MCF 10A (cell line): ENCODE measurements at regions of chr3 and their contacts with region 1.

Region 1: DNA sequence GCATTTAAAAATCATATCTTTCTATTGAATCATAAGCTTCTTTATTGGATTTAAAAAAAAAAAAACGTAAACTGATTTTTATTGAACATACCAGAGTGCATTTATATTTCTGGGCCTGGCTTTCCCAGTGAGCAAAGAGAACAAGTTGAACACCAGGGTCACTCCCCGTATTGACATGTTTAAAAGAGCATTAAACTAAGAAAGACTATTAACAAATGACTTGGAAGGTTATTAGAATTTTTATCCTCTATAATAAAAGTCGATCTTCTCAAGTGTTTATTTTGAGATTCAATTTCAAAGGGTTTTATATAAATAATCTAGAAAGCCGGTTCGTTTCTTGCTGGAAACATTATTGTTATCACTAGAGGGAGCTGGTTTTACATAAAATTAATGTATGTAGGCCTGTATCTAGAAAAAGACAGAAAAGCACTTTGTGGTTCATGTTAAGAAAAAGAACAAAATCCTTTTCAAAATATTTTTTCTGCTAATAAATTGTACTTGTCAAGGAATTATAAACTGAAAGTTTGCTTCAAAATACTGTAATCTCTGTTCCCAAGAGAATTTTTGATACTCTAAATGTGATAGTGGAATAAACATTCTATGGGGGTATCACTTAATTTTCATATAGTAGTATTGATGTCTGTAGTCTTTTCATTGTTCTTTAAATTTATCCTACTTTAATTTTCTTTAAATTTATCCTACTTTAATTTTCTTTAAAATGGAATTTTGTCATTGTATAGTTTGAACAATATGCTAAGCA is 321.8 kb upstream of the MME start:
- DNase-seq: peak; percentile 37
- H3K4me3 Mint-ChIP-seq: no peak overlapping the region
- H3K27ac Mint-ChIP-seq: no peak overlapping the region
- H3K4me1 Mint-ChIP-seq: peaks cover 5% of the 10 kb centered on the region
- H3K27me3 Mint-ChIP-seq: no peaks in the 10 kb centered on the region
- CTCF ChIP-seq: peak; percentile 40

Region 2: GRCh38 chr3:154954753-154955152 is 196.5 kb after region 1 on chr3:
- CTCF ChIA-PET with region 1: interaction called, 5 read pairs
- POLR2A ChIA-PET with region 1: no interaction called
- intact Hi-C with region 1: loop called (anchors 1 kb)
- DNase-seq: peak; percentile 70
- H3K4me3 Mint-ChIP-seq: no peak overlapping the region
- H3K27ac Mint-ChIP-seq: no peak overlapping the region
- H3K4me1 Mint-ChIP-seq: peaks cover 11% of the 10 kb centered on the region
- H3K27me3 Mint-ChIP-seq: no peaks in the 10 kb centered on the region
- CTCF ChIP-seq: peak; percentile 62